ENCODE measurements at regions of chr2 and their contacts with region 1.

Region 1: DNA sequence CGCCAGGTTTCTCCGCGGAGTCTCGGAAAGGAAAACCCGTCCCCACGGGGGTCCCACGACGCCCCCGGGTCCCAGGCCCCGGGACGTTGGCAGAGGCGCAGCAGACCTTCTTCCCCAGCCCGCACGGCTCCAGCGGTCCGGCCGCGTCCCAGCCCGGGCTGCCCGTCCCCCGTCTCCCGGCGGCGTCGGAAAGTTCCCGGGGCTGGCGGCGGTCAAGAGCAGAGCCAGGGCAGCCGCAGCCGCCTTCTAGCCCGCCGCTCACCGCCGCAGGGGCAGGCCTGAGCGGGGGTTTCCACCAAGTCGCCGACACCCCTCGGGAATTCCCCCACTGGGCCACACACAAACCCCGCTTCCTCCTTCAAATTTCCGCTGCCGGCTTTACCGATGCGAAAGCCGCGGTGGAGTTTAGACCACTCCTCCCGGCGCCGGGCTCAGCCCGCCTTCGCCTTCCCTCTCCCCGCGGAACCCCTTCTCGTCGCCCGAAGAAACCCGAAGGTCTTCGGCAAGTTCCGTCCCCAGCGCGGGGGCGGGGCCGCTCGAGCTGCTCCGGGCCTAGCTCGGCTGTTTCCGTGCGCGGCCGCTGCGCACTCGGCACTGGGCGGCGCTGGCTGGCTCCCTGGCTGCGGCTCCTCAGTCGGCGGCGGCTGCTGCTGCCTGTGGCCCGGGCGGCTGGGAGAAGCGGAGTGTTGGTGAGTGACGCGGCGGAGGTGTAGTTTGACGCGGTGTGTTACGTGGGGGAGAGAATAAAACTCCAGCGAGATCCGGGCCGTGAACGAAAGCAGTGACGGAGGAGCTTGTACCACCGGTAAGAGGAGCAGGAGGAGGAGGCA is at the start of gene CREB1:
- DNase-seq: peak; percentile 99 to 100 (median 100)
- ATAC-seq: peak; percentile 80
- H3K4me3 ChIP-seq: peak within 1 kb of the TSS; percentile 88
- H3K4me3 Mint-ChIP-seq: peak within 1 kb of the TSS; percentile 99
- H3K27ac ChIP-seq: peak within 1 kb of the TSS; percentile 100
- H3K27ac Mint-ChIP-seq: peak within 1 kb of the TSS; percentile 97
- H3K4me1 ChIP-seq: peaks cover 48% of the 10 kb centered on the region
- H3K4me1 Mint-ChIP-seq: peaks cover 78% of the 10 kb centered on the region
- H3K27me3 ChIP-seq: no peaks in the 10 kb centered on the region
- H3K27me3 Mint-ChIP-seq: no peaks in the 10 kb centered on the region
- CTCF ChIP-seq: no peak
- total RNA-seq, gene CREB1: 62.5 to 67.1 TPM

Region 2: GRCh38 chr2:206765242-206766056 is 764.1 kb before region 1 on chr2 and contains the starts of genes FASTKD2 and MDH1B:
- CTCF ChIA-PET with region 1: no interaction called
- POLR2A ChIA-PET with region 1: interaction called, 20 read pairs
- intact Hi-C with region 1: loop called in 1 of 2 experiments (anchors 5 kb)
- DNase-seq: peak; percentile 63 to 94 (median 74)
- ATAC-seq: peak; percentile 89
- H3K4me3 ChIP-seq: peak within 1 kb of the TSS; percentile 71
- H3K4me3 Mint-ChIP-seq: peak within 1 kb of the TSS; percentile 96
- H3K27ac ChIP-seq: peak within 1 kb of the TSS; percentile 80 to 85
- H3K27ac Mint-ChIP-seq: peak within 1 kb of the TSS; percentile 97
- H3K4me1 ChIP-seq: peaks cover 16% of the 10 kb centered on the region
- H3K4me1 Mint-ChIP-seq: peaks cover 46% of the 10 kb centered on the region
- H3K27me3 ChIP-seq: peaks cover 0 to 13% of the 10 kb centered on the region in 2 experiments
- H3K27me3 Mint-ChIP-seq: peaks cover 5% of the 10 kb centered on the region
- CTCF ChIP-seq: no peak
- total RNA-seq, gene FASTKD2: 24.9 to 25.7 TPM
- total RNA-seq, gene MDH1B: 0.25 to 0.31 TPM

Region 3: GRCh38 chr2:207484444-207485391 is 44.8 kb before region 1 on chr2:
- CTCF ChIA-PET with region 1: no interaction called
- POLR2A ChIA-PET with region 1: interaction called, 25 read pairs
- intact Hi-C with region 1: loop called (anchors 2 to 5 kb)
- DNase-seq: no peak
- ATAC-seq: no peak
- H3K4me3 ChIP-seq: no peak overlapping the region
- H3K4me3 Mint-ChIP-seq: no peak overlapping the region
- H3K27ac ChIP-seq: no peak overlapping the region
- H3K27ac Mint-ChIP-seq: no peak overlapping the region
- H3K4me1 ChIP-seq: peaks cover 4% of the 10 kb centered on the region
- H3K4me1 Mint-ChIP-seq: peaks cover 37% of the 10 kb centered on the region
- H3K27me3 ChIP-seq: no peaks in the 10 kb centered on the region
- H3K27me3 Mint-ChIP-seq: no peaks in the 10 kb centered on the region
- CTCF ChIP-seq: no peak

Region 4: DNA sequence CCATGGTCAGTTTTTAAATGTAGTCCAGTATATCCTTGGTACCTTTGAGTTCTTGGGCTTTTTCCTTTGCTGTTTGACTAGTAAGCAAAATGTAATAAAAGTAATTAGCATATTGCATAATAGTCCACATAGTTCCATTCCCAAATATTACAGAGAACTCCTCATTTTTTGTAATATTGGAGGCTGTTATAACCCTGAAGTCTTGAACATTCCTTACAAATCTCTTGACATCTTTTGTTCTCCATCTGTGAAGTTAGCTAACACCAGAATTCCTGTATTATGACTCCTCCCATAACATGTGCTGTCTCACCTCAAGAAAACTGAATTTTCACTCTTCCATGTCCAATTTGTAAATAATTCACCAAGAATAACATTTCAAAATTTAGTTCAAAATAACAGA is 17.3 kb after region 1 on chr2:
- CTCF ChIA-PET with region 1: interaction called, 5 read pairs
- POLR2A ChIA-PET with region 1: interaction called, 39 read pairs
- intact Hi-C with region 1: no loop called
- DNase-seq: no peak
- ATAC-seq: no peak
- H3K4me3 ChIP-seq: no peak overlapping the region
- H3K4me3 Mint-ChIP-seq: no peak overlapping the region
- H3K27ac ChIP-seq: no peak overlapping the region
- H3K27ac Mint-ChIP-seq: peak overlapping the region; percentile 72
- H3K4me1 ChIP-seq: peaks cover 19% of the 10 kb centered on the region
- H3K4me1 Mint-ChIP-seq: peaks cover 81% of the 10 kb centered on the region
- H3K27me3 ChIP-seq: no peaks in the 10 kb centered on the region
- H3K27me3 Mint-ChIP-seq: no peaks in the 10 kb centered on the region
- CTCF ChIP-seq: no peak

Region 5: GRCh38 chr2:207600231-207600630 is 70.7 kb after region 1 on chr2:
- CTCF ChIA-PET with region 1: no interaction called
- POLR2A ChIA-PET with region 1: interaction called, 14 read pairs
- intact Hi-C with region 1: no loop called
- DNase-seq: no peak
- ATAC-seq: no peak
- H3K4me3 ChIP-seq: no peak overlapping the region
- H3K4me3 Mint-ChIP-seq: no peak overlapping the region
- H3K27ac ChIP-seq: peak overlapping the region in 1 of 2 donors; percentile 17
- H3K27ac Mint-ChIP-seq: peak overlapping the region; percentile 46
- H3K4me1 ChIP-seq: no peaks in the 10 kb centered on the region
- H3K4me1 Mint-ChIP-seq: peaks cover 32% of the 10 kb centered on the region
- H3K27me3 ChIP-seq: no peaks in the 10 kb centered on the region
- H3K27me3 Mint-ChIP-seq: no peaks in the 10 kb centered on the region
- CTCF ChIP-seq: no peak

Region 6: DNA sequence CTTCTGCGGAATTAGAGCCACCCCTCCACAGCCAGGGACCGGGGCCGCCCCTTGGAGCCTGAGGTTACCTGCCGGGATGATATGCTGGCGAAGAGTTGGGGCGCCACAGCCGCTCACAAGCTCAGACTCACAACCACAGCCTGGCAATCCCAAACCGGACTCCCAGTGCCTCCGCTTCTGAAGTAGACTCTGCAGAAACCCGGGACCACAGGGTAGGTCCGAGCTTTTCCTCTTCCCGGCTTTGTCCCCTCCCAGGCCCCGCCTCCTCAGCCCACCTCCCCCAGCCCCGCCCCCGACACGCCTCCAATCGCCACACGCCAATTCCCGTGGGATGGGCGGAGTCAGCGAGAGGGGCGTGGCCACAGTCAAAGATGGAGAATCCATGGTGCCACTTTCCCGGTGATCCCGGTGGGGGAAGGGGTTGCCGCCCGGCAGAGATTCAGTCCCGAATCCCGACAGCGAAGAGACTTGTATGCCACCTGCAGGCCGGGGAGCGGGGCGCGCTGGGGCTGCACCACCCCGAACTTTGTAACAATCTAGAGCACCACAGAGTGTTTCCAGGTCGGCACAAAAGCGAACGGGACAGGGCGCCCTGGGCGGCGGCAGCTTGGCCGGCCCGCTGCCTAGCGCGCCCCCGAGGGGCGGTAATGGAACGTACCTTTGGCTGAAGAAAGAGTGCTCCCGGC is 725.5 kb after region 1 on chr2 and contains the start of gene IDH1:
- CTCF ChIA-PET with region 1: no interaction called
- POLR2A ChIA-PET with region 1: no interaction called
- intact Hi-C with region 1: loop called in 1 of 2 experiments (anchors 5 kb)
- DNase-seq: peak; percentile 87 to 98 (median 92)
- ATAC-seq: peak; percentile 80
- H3K4me3 ChIP-seq: peak within 1 kb of the TSS; percentile 86
- H3K4me3 Mint-ChIP-seq: peak within 1 kb of the TSS; percentile 100
- H3K27ac ChIP-seq: peak within 1 kb of the TSS; percentile 37 to 53
- H3K27ac Mint-ChIP-seq: peak within 1 kb of the TSS; percentile 74
- H3K4me1 ChIP-seq: peaks cover 20% of the 10 kb centered on the region
- H3K4me1 Mint-ChIP-seq: peaks cover 25% of the 10 kb centered on the region
- H3K27me3 ChIP-seq: no peaks in the 10 kb centered on the region
- H3K27me3 Mint-ChIP-seq: no peaks in the 10 kb centered on the region
- CTCF ChIP-seq: no peak
- total RNA-seq, gene IDH1: 3.0 to 3.4 TPM

Measured in CD4-positive, alpha-beta T cell (primary cell).